Left ventricle myocardium inferior (tissue), 1 donor: ENCODE measurements at regions of chr3 and their contacts with region 1.

Region 1: GRCh38 chr3:159828542-159828943 is 160.1 kb upstream of the IL12A start:
- DNase-seq: no peak
- H3K4me3 ChIP-seq: no peak overlapping the region
- H3K27ac ChIP-seq: peak overlapping the region; percentile 70
- H3K4me1 ChIP-seq: peaks cover 50% of the 10 kb centered on the region
- H3K27me3 ChIP-seq: no peaks in the 10 kb centered on the region
- CTCF ChIP-seq: peak; percentile 70

Region 2: DNA sequence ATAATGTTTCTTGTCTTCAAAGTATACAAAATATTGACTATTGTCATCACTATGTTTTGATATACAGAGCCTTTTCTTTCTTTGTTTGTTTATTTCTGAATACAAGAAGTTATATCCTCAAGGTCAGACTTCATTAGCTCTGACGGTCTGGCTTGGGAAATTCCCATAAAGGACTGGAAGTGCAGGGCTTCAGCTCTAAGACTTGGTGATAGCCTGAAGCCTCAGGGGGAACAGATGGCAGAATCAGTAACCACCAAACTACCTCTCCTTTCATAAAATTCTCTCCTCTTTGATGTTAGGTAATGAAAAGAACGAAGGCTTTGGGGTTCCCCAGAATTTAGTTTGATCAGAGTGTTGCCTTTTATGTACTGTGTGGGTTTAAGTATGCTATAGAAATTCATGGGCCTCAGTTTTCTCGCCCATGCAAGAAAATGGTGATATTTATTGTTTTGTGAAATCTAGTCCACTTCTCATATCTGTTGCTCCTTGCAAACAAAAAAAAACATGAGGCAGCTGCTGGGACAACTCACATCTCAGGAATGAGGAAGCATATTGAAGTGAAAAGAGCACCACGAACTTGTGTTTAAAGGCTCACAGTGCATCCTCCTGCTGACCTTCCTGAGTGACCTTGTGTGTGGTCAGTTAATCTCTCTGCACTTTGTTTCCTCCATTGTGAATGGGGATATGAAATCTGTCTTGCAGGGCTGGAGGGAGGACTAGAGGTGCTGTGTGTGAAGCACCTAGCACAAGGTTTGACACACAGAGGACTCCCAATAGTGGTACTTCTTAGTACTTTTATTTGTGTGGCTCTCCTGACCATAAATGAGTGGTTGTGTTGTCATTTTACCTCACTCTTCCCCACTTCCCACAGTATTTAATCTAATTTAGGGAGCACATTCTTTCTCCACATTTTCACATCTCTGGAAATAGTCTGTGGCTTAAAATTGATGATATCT is 409.7 kb before region 1 on chr3:
- intact Hi-C with region 1: no loop called
- DNase-seq: no peak
- H3K4me3 ChIP-seq: no peak overlapping the region
- H3K27ac ChIP-seq: no peak overlapping the region
- H3K4me1 ChIP-seq: no peaks in the 10 kb centered on the region
- H3K27me3 ChIP-seq: no peaks in the 10 kb centered on the region
- CTCF ChIP-seq: no peak

Region 3: DNA sequence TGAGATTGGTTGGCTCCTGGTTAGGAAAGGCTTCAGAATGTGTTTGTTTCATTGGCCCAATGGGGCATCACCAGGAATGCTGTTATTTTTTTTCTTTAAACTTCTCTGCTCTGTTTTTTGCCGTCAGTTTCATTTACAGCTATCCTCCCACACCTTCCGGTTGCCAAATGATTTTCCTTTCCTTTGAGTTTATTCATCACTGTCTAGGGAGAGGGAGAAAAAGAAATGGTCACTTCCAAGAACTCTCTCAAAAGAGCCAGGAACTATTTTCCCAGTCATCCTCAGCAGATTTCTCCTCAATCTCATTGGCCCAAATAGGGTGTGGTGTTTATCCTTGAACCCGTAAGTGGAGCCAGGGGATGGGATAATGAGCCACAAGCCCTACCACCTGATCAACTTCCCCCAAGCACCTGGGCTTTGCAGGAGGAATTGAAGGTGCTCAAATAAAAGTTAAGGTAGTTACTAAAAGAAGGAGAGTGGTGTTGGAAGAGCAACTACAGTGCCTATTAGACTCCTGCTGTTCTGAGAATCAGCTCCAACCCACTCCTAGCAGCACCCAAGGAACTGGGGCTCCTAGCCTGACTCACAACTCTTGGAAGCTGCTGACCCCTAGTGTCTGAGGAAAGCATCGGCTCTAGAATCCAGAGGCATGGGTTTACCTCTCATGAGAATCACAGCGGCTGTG is 23.7 kb before region 1 on chr3:
- intact Hi-C with region 1: no loop called
- DNase-seq: peak; percentile 37
- H3K4me3 ChIP-seq: no peak overlapping the region
- H3K27ac ChIP-seq: peak overlapping the region; percentile 61
- H3K4me1 ChIP-seq: peaks cover 78% of the 10 kb centered on the region
- H3K27me3 ChIP-seq: no peaks in the 10 kb centered on the region
- CTCF ChIP-seq: peak; percentile 93

Region 4: DNA sequence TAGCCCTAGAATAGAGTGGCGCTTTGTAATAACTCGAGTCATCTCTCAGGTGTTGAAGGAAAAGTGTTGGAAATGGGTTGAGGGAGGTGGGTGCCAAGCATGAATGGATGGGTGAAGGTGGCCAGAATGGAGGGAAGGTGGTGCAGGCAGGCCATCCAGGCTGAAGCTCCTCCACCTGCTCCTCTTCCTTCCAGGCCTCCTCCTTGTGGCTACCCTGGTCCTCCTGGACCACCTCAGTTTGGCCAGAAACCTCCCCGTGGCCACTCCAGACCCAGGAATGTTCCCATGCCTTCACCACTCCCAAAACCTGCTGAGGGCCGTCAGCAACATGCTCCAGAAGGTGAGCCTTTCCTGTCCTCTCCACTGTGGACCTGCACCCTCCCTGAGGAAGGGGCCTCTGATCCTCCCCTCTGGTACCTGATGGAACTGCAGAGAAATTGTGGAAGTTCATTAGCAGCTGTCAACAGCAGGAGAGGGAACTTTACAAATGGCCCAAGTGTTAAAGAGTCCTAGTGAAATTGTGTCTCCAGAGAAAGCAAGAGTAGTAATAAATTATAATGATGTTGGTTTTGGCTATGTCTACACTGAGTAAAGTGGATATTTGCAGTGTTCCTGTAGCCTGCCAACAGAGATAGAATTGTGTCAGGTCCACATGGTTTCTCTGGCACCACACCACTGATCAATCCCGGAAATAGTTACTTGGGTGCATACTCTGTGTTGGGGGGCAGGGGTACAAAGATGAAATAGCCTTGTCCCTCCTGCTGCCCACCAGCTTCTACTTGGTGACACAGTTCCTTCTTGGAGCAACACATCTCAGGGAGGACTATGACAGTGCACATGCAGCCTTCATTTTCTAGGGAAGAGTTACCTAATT is 161.7 kb after region 1 on chr3:
- intact Hi-C with region 1: loop called (anchors 5 kb)
- DNase-seq: no peak
- H3K4me3 ChIP-seq: no peak overlapping the region
- H3K27ac ChIP-seq: no peak overlapping the region
- H3K4me1 ChIP-seq: peaks cover 17% of the 10 kb centered on the region
- H3K27me3 ChIP-seq: no peaks in the 10 kb centered on the region
- CTCF ChIP-seq: no peak

Region 5: DNA sequence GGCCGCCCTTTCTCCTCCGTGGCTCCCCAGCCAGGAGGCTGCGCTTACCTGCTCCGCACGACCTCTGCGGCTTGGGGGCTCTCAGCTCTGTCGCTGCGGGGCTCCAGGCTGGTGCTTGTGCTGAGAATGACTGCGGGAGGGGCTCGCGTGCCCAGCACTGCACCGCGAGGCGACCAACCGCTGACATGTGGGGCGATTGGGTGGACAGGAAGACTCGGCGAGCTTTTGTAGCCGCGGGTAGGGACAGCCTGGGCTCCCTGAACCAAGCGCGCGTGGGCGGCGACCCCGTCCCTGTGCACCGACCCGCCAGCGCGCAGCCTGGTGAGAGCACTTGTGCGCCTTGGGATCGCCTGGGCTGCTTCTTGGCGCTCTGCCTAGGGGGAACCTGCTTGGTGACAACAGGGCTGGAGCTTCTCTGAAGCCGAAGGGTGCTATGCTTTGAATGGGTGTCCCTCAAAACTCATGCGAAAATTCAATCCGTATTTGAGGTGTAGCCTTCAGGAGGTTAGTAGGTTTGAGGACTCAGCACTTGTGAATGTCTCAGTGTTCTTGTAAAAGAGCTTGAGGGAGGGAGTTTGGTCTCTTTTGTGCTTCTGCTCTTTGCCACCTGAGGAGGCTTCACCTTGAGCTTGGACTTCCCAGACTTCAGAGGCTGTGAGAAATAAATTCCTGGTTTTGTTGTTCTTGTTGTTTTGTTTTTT is 210.5 kb after region 1 on chr3:
- intact Hi-C with region 1: no loop called
- DNase-seq: no peak
- H3K4me3 ChIP-seq: peak overlapping the region; percentile 53
- H3K27ac ChIP-seq: no peak overlapping the region
- H3K4me1 ChIP-seq: peaks cover 8% of the 10 kb centered on the region
- H3K27me3 ChIP-seq: peaks cover 54% of the 10 kb centered on the region
- CTCF ChIP-seq: no peak